ENCODE measurements at regions of chr2 and their contacts with region 1.

Region 1: GRCh38 chr2:38377050-38377828 is at the start of gene ATL2:
- DNase-seq: peak; percentile 94
- H3K4me3 Mint-ChIP-seq: peak within 1 kb of the TSS; percentile 94
- H3K27ac Mint-ChIP-seq: peak within 1 kb of the TSS; percentile 98
- H3K4me1 Mint-ChIP-seq: peaks cover 31% of the 10 kb centered on the region
- H3K27me3 Mint-ChIP-seq: no peaks in the 10 kb centered on the region
- CTCF ChIP-seq: no peak
- total RNA-seq, gene ATL2: 54.2 and 61.3 TPM in 2 replicates

Region 2: DNA sequence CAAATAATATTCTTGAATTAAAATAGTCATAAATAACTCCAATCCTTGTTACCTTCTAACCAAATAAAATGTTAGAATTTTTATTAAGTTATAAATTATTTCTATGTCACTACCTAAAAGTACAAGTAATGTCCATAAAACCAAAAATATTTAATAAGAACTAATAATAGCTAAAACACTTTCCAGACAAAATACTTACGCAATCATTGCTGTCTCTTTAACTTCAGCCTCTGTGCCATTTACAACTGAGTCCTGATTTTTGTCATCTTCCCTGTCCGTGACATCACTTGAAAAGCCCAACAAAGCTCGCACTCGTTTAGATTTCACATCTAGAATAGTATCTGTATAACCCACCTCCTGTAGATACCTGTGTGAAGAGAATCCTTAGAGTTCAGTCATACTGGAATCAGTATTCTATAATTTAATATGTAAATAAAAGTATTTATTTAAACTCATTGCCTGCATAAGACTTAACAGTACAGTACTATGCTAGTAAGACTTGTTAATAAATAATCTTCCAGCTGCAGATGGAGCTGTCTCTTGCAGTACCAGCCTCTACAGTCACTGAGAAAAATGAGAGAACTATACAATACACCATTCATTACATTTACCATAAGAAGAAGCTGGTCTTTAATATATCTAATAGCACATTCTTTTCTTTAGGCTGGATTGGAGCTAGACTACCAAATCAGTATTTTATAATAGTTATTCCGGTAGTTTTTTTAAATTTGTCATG is 1474.7 kb before region 1 on chr2:
- CTCF ChIA-PET with region 1: no interaction called
- POLR2A ChIA-PET with region 1: no interaction called
- intact Hi-C with region 1: no loop called
- DNase-seq: no peak
- H3K4me3 Mint-ChIP-seq: no peak overlapping the region
- H3K27ac Mint-ChIP-seq: no peak overlapping the region
- H3K4me1 Mint-ChIP-seq: no peaks in the 10 kb centered on the region
- H3K27me3 Mint-ChIP-seq: no peaks in the 10 kb centered on the region
- CTCF ChIP-seq: no peak

Region 3: DNA sequence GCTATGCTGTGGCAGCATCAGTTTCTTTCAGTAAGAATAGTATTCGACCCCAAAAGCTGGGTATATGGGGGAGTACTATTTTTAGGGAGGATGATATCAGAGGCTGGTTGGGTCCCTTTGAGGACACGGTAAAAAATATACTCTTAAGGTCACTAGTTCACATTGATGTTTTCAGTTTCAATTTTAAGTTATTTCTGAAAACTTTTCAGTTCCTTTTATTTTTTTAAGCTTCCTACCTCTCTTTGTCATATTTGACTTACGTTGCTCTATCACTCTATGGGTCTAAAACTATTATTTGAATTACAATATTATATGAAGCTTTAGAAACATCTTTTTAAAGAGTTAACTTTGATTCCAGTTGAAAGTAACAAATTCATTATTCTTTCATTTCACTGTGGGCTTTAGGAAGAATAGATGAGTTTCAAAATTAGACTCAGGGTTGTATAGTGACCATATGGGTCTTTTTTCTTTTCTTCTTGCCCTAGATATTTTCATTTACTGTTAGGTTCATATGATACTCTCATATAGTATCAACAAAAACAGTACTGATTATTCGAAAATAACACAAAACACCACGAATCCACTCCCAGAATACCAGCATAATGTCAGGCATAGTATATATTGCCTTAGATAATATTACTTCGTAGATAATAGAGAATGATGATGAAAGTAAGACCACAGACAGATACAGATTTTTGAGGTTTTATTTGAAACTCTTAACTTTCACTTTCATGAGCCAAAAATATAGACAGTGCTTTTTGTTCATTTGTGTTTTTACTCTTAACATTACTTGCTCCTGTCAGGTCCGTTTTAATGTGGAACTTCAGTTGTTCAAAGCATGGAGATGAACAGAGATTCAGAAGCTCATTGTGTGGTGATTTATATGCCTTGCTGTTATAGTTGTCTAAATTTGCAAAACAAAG is 442.4 kb before region 1 on chr2:
- CTCF ChIA-PET with region 1: no interaction called
- POLR2A ChIA-PET with region 1: no interaction called
- intact Hi-C with region 1: no loop called
- DNase-seq: no peak
- H3K4me3 Mint-ChIP-seq: no peak overlapping the region
- H3K27ac Mint-ChIP-seq: no peak overlapping the region
- H3K4me1 Mint-ChIP-seq: no peaks in the 10 kb centered on the region
- H3K27me3 Mint-ChIP-seq: no peaks in the 10 kb centered on the region
- CTCF ChIP-seq: no peak

Region 4: GRCh38 chr2:37947306-37947705 is 429.9 kb before region 1 on chr2:
- CTCF ChIA-PET with region 1: no interaction called
- POLR2A ChIA-PET with region 1: no interaction called
- intact Hi-C with region 1: no loop called
- DNase-seq: no peak
- H3K4me3 Mint-ChIP-seq: no peak overlapping the region
- H3K27ac Mint-ChIP-seq: no peak overlapping the region
- H3K4me1 Mint-ChIP-seq: no peaks in the 10 kb centered on the region
- H3K27me3 Mint-ChIP-seq: no peaks in the 10 kb centered on the region
- CTCF ChIP-seq: no peak

Region 5: GRCh38 chr2:38315707-38316333 is 61.4 kb before region 1 on chr2:
- CTCF ChIA-PET with region 1: interaction called, 28 read pairs
- POLR2A ChIA-PET with region 1: interaction called, 15 read pairs
- intact Hi-C with region 1: loop called (anchors 2 kb)
- DNase-seq: peak; percentile 63
- H3K4me3 Mint-ChIP-seq: no peak overlapping the region
- H3K27ac Mint-ChIP-seq: no peak overlapping the region
- H3K4me1 Mint-ChIP-seq: no peaks in the 10 kb centered on the region
- H3K27me3 Mint-ChIP-seq: no peaks in the 10 kb centered on the region
- CTCF ChIP-seq: peak; percentile 75

Region 6: GRCh38 chr2:38362232-38362631 is 15.0 kb before region 1 on chr2:
- CTCF ChIA-PET with region 1: interaction called, 14 read pairs
- POLR2A ChIA-PET with region 1: interaction called, 17 read pairs
- intact Hi-C with region 1: no loop called
- DNase-seq: no peak
- H3K4me3 Mint-ChIP-seq: no peak overlapping the region
- H3K27ac Mint-ChIP-seq: no peak overlapping the region
- H3K4me1 Mint-ChIP-seq: peaks cover 11% of the 10 kb centered on the region
- H3K27me3 Mint-ChIP-seq: no peaks in the 10 kb centered on the region
- CTCF ChIP-seq: no peak

Region 7: GRCh38 chr2:38417745-38418689 is 40.8 kb after region 1 on chr2:
- CTCF ChIA-PET with region 1: interaction called, 4 read pairs
- POLR2A ChIA-PET with region 1: interaction called, 34 read pairs
- intact Hi-C with region 1: no loop called
- DNase-seq: no peak
- H3K4me3 Mint-ChIP-seq: no peak overlapping the region
- H3K27ac Mint-ChIP-seq: peak overlapping the region; percentile 36
- H3K4me1 Mint-ChIP-seq: peaks cover 6% of the 10 kb centered on the region
- H3K27me3 Mint-ChIP-seq: no peaks in the 10 kb centered on the region
- CTCF ChIP-seq: no peak

Region 8: GRCh38 chr2:38444247-38444646 is 67.0 kb after region 1 on chr2:
- CTCF ChIA-PET with region 1: interaction called, 41 read pairs
- POLR2A ChIA-PET with region 1: interaction called, 151 read pairs
- intact Hi-C with region 1: no loop called
- DNase-seq: peak; percentile 60
- H3K4me3 Mint-ChIP-seq: no peak overlapping the region
- H3K27ac Mint-ChIP-seq: no peak overlapping the region
- H3K4me1 Mint-ChIP-seq: peaks cover 37% of the 10 kb centered on the region
- H3K27me3 Mint-ChIP-seq: no peaks in the 10 kb centered on the region
- CTCF ChIP-seq: no peak

Region 9: DNA sequence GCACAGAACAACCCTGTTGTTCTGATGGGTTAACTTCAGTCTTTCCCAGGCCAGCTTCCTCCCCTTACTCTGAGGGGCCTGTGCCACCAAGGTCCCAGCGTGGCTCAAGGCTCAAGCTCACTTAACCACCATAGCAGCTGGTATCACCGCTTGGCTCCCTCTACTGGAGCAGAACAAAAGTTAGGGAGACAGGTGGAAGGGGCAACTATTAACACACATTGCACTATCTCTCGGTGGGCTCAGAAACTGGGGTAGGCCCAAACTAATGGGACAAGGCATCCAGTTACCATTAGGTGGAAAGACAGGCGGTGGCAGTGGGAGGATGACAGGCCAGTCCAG is 88.5 kb after region 1 on chr2:
- CTCF ChIA-PET with region 1: interaction called, 58 read pairs
- POLR2A ChIA-PET with region 1: interaction called, 107 read pairs
- intact Hi-C with region 1: loop called (anchors 1 kb)
- DNase-seq: peak; percentile 64
- H3K4me3 Mint-ChIP-seq: no peak overlapping the region
- H3K27ac Mint-ChIP-seq: peak overlapping the region; percentile 70
- H3K4me1 Mint-ChIP-seq: peaks cover 24% of the 10 kb centered on the region
- H3K27me3 Mint-ChIP-seq: no peaks in the 10 kb centered on the region
- CTCF ChIP-seq: peak; percentile 31

Region 10: DNA sequence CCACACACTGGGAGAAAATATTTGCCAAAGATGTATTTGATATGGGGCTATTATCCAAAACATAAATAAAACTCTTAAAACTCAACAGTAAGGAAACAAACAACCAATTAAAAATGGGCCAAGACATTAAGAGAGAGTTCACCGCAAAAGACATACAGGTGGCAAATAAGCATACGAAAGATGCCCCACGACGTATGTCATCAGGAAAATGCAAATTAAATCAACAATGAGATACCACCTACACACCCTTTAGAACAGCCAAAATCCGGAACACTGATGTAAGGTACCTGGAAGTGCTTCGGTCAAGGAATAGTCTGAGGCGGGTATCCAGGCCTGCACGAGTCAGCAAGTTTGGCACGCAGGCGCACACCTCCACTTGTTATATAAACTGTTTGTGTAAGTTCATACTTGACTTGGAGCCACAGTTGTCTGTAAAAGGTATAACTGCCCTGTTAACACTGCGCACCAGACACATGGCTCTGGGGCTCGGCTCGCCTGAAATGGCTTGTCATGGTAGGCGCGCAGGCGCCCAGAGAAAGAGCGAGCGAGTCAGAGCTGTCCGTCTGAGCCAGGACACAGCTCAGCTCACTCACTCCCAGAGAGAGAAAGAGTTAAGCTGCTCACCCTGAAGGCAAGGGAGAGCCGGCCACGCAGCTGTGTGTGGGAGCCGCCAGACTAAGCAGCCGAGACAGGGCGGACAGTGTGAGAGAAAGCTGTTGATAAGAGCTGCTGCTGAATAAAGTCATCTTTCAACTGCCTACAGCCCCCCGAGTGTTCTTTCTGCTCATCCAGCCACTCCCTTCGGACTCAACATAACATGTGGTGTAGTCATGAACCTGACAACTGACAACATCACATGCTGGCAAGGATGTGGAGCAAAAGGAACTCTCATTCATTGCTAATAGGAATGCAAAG is 138.2 kb after region 1 on chr2:
- CTCF ChIA-PET with region 1: interaction called, 9 read pairs
- POLR2A ChIA-PET with region 1: interaction called, 50 read pairs
- intact Hi-C with region 1: no loop called
- DNase-seq: peak; percentile 89
- H3K4me3 Mint-ChIP-seq: peak overlapping the region; percentile 75
- H3K27ac Mint-ChIP-seq: peak overlapping the region; percentile 94
- H3K4me1 Mint-ChIP-seq: peaks cover 20% of the 10 kb centered on the region
- H3K27me3 Mint-ChIP-seq: no peaks in the 10 kb centered on the region
- CTCF ChIP-seq: no peak

Region 11: GRCh38 chr2:38549071-38549704 is 171.9 kb after region 1 on chr2:
- CTCF ChIA-PET with region 1: no interaction called
- POLR2A ChIA-PET with region 1: no interaction called
- intact Hi-C with region 1: no loop called
- DNase-seq: no peak
- H3K4me3 Mint-ChIP-seq: no peak overlapping the region
- H3K27ac Mint-ChIP-seq: no peak overlapping the region
- H3K4me1 Mint-ChIP-seq: no peaks in the 10 kb centered on the region
- H3K27me3 Mint-ChIP-seq: no peaks in the 10 kb centered on the region
- CTCF ChIP-seq: no peak

Measured in MCF 10A (cell line).